Caco-2 (cell line): ENCODE measurements at regions of chr15 and their contacts with region 1.

Region 1: GRCh38 chr15:68924866-68925560 is 5.3 kb upstream of the SPESP1 start:
- DNase-seq: peak; percentile 73 to 85
- H3K4me3 ChIP-seq: no peak overlapping the region
- H3K4me3 Mint-ChIP-seq: no peak overlapping the region
- H3K27ac Mint-ChIP-seq: no peak overlapping the region
- H3K4me1 ChIP-seq: no peaks in the 10 kb centered on the region
- H3K4me1 Mint-ChIP-seq: no peaks in the 10 kb centered on the region
- H3K27me3 ChIP-seq: no peaks in the 10 kb centered on the region
- H3K27me3 Mint-ChIP-seq: peaks cover 14% of the 10 kb centered on the region
- CTCF ChIP-seq: peak; percentile 83 to 90

Region 2: DNA sequence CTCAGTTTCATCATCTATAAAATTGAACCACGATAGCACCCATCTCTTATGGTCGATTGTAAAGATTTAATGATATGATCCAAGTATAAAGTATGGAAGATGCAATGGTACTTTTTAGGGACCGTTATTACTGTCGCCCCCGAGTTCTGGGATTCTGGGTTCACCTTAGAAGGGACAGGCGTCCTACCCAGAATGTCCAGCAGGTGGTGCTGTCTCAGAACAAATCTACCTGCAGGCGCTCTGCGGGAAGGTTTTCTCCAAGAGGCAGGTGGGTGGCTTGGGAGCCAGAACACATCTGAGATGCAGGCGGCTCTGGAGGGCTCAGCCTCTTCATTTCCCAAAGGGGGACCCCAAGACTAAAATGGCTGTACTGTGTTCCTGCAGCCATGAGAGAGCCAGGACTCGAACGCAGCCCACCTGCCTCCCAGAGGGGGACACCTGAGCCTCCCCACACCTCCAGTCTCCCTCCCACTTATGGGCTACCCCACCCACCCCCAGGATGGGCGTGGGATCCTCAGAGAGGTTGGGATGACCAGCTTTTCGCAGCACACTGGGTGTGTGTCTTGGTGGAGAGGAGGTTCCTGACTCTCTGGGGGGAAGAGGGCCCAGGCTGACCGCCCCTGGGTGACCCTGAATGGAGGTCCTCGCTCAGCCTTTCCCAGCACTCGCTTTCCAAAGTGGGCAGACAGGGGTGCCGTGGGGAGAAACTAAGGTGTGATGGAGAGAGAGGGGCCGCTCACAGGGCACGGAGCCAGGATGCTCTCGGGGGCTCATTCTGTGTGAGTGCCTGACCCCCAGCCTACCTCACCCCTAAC is 374.3 kb before region 1 on chr15:
- CTCF ChIA-PET with region 1: interaction called, 8 read pairs
- POLR2A ChIA-PET with region 1: no interaction called
- intact Hi-C with region 1: loop called (anchors 1 kb)
- DNase-seq: peak; percentile 70 to 80
- H3K4me3 ChIP-seq: no peak overlapping the region
- H3K4me3 Mint-ChIP-seq: no peak overlapping the region
- H3K27ac Mint-ChIP-seq: no peak overlapping the region
- H3K4me1 ChIP-seq: no peaks in the 10 kb centered on the region
- H3K4me1 Mint-ChIP-seq: no peaks in the 10 kb centered on the region
- H3K27me3 ChIP-seq: no peaks in the 10 kb centered on the region
- H3K27me3 Mint-ChIP-seq: peaks cover 19% of the 10 kb centered on the region
- CTCF ChIP-seq: peak; percentile 84 to 89

Region 3: GRCh38 chr15:68559345-68560310 is 365.4 kb before region 1 on chr15:
- CTCF ChIA-PET with region 1: interaction called, 10 read pairs
- POLR2A ChIA-PET with region 1: no interaction called
- intact Hi-C with region 1: loop called (anchors 2 kb)
- DNase-seq: peak; percentile 66 to 84
- H3K4me3 ChIP-seq: no peak overlapping the region
- H3K4me3 Mint-ChIP-seq: peak overlapping the region; percentile 61
- H3K27ac Mint-ChIP-seq: no peak overlapping the region
- H3K4me1 ChIP-seq: no peaks in the 10 kb centered on the region
- H3K4me1 Mint-ChIP-seq: no peaks in the 10 kb centered on the region
- H3K27me3 ChIP-seq: no peaks in the 10 kb centered on the region
- H3K27me3 Mint-ChIP-seq: peaks cover 13% of the 10 kb centered on the region
- CTCF ChIP-seq: peak; percentile 88 to 90

Region 4: GRCh38 chr15:68672781-68673205 is 252.2 kb before region 1 on chr15:
- CTCF ChIA-PET with region 1: interaction called, 10 read pairs
- POLR2A ChIA-PET with region 1: no interaction called
- intact Hi-C with region 1: no loop called
- DNase-seq: peak in 1 of 2 experiments; percentile 16
- H3K4me3 ChIP-seq: no peak overlapping the region
- H3K4me3 Mint-ChIP-seq: no peak overlapping the region
- H3K27ac Mint-ChIP-seq: no peak overlapping the region
- H3K4me1 ChIP-seq: no peaks in the 10 kb centered on the region
- H3K4me1 Mint-ChIP-seq: no peaks in the 10 kb centered on the region
- H3K27me3 ChIP-seq: no peaks in the 10 kb centered on the region; the same call in 1 of the 2 replicates
- H3K27me3 Mint-ChIP-seq: peaks cover 3% of the 10 kb centered on the region
- CTCF ChIP-seq: peak in 1 of 2 experiments; percentile 43

Region 5: GRCh38 chr15:68730471-68730919 is 194.5 kb before region 1 on chr15:
- CTCF ChIA-PET with region 1: interaction called, 4 read pairs
- POLR2A ChIA-PET with region 1: no interaction called
- intact Hi-C with region 1: loop called (anchors 1 kb)
- DNase-seq: peak; percentile 40 to 44
- H3K4me3 ChIP-seq: no peak overlapping the region
- H3K4me3 Mint-ChIP-seq: no peak overlapping the region
- H3K27ac Mint-ChIP-seq: no peak overlapping the region
- H3K4me1 ChIP-seq: peaks cover 16% of the 10 kb centered on the region; the same call in 1 of the 2 replicates
- H3K4me1 Mint-ChIP-seq: peaks cover 15% of the 10 kb centered on the region
- H3K27me3 ChIP-seq: no peaks in the 10 kb centered on the region
- H3K27me3 Mint-ChIP-seq: peaks cover 4% of the 10 kb centered on the region
- CTCF ChIP-seq: peak; percentile 48 to 56

Region 6: GRCh38 chr15:68783226-68784058 is 141.6 kb before region 1 on chr15:
- CTCF ChIA-PET with region 1: no interaction called
- POLR2A ChIA-PET with region 1: no interaction called
- intact Hi-C with region 1: loop called (anchors 1 kb)
- DNase-seq: peak; percentile 48 to 70
- H3K4me3 ChIP-seq: no peak overlapping the region
- H3K4me3 Mint-ChIP-seq: no peak overlapping the region
- H3K27ac Mint-ChIP-seq: no peak overlapping the region
- H3K4me1 ChIP-seq: peaks cover 17% of the 10 kb centered on the region
- H3K4me1 Mint-ChIP-seq: peaks cover 11% of the 10 kb centered on the region
- H3K27me3 ChIP-seq: no peaks in the 10 kb centered on the region
- H3K27me3 Mint-ChIP-seq: no peaks in the 10 kb centered on the region
- CTCF ChIP-seq: peak; percentile 64 to 81

Region 7: DNA sequence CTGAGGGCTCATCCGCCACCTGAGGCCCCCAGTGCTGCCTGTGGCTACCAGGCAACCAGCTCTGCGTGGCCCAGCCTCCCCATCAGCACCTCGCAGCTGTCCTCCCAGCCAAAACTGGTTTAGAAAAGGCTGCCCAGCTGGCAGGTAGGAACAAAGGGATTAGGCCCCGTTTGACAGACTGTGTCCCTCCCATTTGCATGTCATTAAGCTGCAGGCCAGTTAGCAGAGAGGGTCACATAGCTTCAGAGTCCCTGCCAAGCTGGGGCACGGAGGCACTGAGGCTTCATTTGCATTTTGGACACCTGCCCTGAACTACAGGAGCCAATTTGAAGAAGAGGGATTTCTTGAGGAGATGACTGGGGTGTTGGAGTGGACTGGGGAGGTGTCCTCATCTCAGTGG is 994.8 kb after region 1 on chr15:
- CTCF ChIA-PET with region 1: no interaction called
- POLR2A ChIA-PET with region 1: no interaction called
- intact Hi-C with region 1: no loop called
- DNase-seq: no peak
- H3K4me3 ChIP-seq: no peak overlapping the region
- H3K4me3 Mint-ChIP-seq: no peak overlapping the region
- H3K27ac Mint-ChIP-seq: no peak overlapping the region
- H3K4me1 ChIP-seq: no peaks in the 10 kb centered on the region
- H3K4me1 Mint-ChIP-seq: no peaks in the 10 kb centered on the region
- H3K27me3 ChIP-seq: no peaks in the 10 kb centered on the region
- H3K27me3 Mint-ChIP-seq: peaks cover 2% of the 10 kb centered on the region
- CTCF ChIP-seq: no peak